Activated B cell treated with CpG ODN at 0.5 μM for 24 hours (primary cell): ENCODE measurements at regions of chr19 and their contacts with region 1.

Region 1: DNA sequence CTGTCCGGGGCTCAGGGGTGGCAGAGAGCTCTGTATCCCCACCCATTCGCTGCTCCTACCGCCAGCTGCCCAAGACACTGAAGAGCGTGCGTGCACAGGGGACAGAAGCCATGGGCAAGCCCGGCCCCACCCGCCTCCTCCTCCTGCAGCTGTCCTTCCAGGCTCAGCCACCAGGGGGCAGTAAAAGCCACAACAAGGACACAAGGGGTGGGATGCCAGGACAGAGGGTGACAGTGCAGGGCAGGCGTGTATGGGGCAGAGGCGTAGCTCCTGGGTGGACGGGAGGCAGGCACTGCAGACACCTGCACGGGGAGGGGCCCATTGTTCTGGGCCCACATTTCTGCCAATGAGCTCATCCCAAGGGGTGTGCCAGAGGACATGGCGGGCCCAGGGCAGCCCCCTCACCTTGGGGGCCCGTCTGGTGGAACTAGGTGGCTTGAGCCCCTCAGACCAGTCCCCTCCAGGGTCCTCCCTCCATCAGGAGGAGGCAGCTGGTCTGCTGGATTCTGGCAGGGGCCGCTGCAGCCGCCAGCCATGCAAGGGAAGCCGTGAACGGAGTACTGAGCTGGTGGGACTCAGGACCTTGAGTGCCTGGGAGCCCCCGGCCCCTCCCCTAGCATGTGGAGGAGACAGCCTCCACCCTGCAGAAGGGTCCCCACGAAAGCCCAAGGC is 61.1 kb downstream of the MLLT1 start:
- DNase-seq: peak; percentile 79
- ATAC-seq: peak; percentile 90
- H3K4me3 Mint-ChIP-seq: no peak overlapping the region
- H3K27ac Mint-ChIP-seq: no peak overlapping the region
- H3K4me1 Mint-ChIP-seq: no peaks in the 10 kb centered on the region
- H3K27me3 Mint-ChIP-seq: no peaks in the 10 kb centered on the region
- CTCF ChIP-seq: no peak

Region 2: GRCh38 chr19:6297202-6297601 is 78.6 kb after region 1 on chr19:
- CTCF ChIA-PET with region 1: interaction called, 12 read pairs
- POLR2A ChIA-PET with region 1: no interaction called
- intact Hi-C with region 1: loop called (anchors 1 kb)
- DNase-seq: no peak
- ATAC-seq: no peak
- H3K4me3 Mint-ChIP-seq: no peak overlapping the region
- H3K27ac Mint-ChIP-seq: no peak overlapping the region
- H3K4me1 Mint-ChIP-seq: no peaks in the 10 kb centered on the region
- H3K27me3 Mint-ChIP-seq: peaks cover 5% of the 10 kb centered on the region
- CTCF ChIP-seq: no peak

Region 3: DNA sequence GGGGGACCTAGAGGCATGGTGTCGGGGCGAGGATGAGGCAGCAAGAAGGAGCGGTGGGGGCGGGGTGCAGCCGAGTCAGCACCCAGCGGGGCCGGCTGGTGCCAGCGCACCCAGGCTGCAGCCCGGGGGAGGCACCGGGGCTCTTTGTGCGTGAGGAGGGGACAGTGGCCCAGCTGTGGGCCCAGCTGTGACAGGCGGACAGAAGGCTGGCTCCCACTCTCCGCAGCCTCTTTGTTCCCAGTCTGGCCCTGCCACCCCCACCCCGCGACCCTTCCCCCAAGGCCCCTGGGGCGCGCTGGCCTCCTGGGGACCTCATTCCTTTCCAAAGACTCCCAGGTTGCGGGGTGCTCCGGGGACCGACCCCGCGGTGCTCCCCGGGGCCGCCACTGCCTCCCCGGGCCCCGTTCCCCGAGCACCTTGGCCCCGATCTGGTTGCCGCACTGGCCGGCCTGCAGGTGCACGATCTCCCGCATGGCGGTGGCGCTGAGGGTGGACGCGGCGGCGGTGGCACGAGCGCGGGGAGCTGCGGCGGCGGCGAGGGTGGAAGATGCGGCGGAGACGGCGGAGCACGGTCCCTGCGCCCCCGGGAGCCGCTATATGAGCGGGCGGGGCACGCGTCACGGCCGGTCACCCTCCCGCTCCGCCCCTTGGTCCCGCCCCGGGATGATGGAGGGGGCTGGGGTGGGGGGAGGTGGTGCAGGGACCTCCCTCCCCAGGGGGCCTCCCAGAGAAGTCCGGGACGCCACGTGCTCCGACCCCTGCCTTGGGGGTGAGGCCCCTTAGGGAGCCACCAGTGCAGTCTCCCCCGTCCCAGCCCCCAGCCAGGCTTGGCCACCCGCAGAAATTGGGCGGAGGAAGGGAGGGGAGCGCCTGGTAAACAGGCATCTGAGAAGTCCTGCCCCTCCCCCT is 283.4 kb after region 1 on chr19 and contains the start of gene TUBB4A:
- CTCF ChIA-PET with region 1: interaction called, 6 read pairs
- POLR2A ChIA-PET with region 1: no interaction called
- intact Hi-C with region 1: loop called (anchors 1 kb)
- DNase-seq: peak; percentile 65
- ATAC-seq: peak; percentile 78
- H3K4me3 Mint-ChIP-seq: peak within 1 kb of the TSS; percentile 87
- H3K27ac Mint-ChIP-seq: no peak within 1 kb of the TSS
- H3K4me1 Mint-ChIP-seq: peaks cover 23% of the 10 kb centered on the region
- H3K27me3 Mint-ChIP-seq: peaks cover 4% of the 10 kb centered on the region
- CTCF ChIP-seq: no peak
- total RNA-seq, gene TUBB4A: 13.2 and 16.8 TPM in 2 replicates

Region 4: DNA sequence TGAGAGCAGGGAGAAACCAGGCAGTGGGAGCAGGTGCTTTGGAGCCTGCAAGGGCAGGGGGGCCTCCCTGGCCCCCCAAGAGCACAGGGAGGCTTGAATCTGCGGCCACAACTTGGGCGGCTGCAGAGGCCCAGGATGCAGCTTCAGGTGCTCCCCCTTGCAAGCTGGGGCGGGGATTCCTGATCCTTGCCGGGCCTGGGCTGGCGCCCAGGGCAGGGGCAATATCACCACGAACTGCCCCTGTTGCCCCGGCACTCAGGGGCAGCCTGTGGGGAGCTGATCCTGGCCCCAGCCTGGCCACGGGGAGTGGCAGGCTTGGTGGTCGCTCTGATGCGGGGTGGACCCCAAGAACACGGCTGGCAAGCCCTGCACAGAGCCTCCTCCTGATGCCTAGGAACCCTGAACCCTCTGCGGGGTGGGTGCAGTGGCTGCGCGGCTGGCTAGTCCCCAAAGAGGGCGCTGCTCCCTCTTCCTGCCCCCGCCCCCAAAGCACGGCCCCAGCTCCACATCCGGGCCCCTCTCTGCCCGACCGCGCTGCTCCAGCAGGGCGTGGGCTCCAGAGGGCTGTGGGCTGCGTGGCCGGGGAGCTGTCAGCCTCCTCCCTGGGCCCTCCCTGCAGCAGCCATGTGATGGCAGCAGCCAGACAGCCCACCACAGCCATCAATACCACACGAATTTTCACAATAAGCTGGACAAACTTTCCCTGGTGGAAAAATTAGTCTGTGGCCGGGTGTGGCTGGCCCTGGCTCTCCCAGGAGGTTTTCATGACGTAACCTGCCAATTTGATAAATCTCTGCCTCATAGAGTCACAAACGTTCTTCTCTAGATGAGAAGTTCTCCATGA is 333.2 kb after region 1 on chr19:
- CTCF ChIA-PET with region 1: no interaction called
- POLR2A ChIA-PET with region 1: interaction called, 11 read pairs
- intact Hi-C with region 1: no loop called
- DNase-seq: peak; percentile 35
- ATAC-seq: peak; percentile 88
- H3K4me3 Mint-ChIP-seq: peak overlapping the region; percentile 19
- H3K27ac Mint-ChIP-seq: no peak overlapping the region
- H3K4me1 Mint-ChIP-seq: peaks cover 9% of the 10 kb centered on the region
- H3K27me3 Mint-ChIP-seq: no peaks in the 10 kb centered on the region
- CTCF ChIP-seq: no peak